Tibial artery (tissue), 4 donors: ENCODE measurements at regions of chr22 and their contacts with region 1.

Region 1: DNA sequence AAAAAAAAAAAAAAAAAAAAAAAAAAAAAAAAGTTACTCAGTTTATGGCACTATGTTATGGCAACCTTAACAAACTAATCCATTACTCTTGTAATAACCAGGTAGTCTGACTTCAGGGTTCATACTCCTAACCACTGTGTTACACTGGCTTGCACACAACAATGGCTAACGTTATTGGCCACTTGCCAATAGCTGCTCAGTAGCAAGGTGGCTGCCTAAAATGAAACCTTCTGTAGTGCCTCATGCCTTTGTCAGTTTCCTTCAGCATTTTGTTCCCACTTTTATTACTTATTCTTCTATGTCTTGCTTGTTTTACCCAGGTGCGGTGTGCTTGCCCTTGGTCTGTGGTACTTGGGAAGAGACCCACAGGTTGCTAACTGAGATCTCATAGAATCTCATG is 173.4 kb upstream of the LARGE1 start:
- DNase-seq: no peak
- H3K4me3 ChIP-seq: no peak overlapping the region
- H3K27ac ChIP-seq: no peak overlapping the region
- H3K4me1 ChIP-seq: no peaks in the 10 kb centered on the region
- H3K27me3 ChIP-seq: peaks cover 0 to 11% of the 10 kb centered on the region in 2 donors
- CTCF ChIP-seq: no peak

Region 2: DNA sequence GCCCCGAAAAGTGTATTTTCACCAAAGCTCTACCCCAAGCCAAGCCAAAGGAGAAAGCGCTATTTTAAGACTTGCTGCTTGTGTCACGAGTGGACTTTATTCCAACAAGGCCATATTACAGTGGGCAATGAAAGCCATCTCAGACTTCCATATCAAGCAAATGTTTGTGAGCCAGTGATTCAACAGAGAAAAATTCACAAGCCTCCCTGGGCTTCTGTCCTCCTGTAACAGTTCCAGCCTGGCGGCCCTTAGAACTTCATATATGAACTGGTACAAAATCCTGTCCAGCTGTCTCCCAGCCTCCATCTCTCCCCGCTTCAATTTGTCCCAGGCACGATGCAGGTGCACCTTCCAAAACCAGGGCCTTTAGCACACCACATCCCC is 184.6 kb before region 1 on chr22:
- intact Hi-C with region 1: no loop called
- DNase-seq: peak; percentile 26 to 71
- H3K4me3 ChIP-seq: peak overlapping the region; percentile 1 to 10
- H3K27ac ChIP-seq: peak overlapping the region; percentile 75 to 78
- H3K4me1 ChIP-seq: peaks cover 0 to 35% (median 22%) of the 10 kb centered on the region in 4 donors
- H3K27me3 ChIP-seq: no peaks in the 10 kb centered on the region
- CTCF ChIP-seq: no peak

Region 3: DNA sequence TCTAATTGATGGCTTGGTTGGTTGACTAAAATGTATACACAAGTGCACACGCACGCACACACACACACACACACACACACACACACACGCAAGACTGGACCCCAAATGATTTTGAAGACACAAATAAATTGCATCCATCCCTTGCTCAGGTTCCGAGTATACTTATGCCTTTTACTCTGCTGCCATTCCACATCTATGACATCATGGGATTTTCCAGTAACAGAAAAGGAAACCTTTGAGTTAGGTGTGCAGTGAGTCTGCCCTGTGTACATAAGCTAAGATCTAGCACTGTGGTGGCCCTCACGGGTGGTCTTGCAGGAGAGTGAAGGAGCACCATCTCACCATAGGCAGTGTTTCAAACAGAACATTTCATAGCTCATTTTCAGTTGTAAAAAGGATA is 152.9 kb before region 1 on chr22:
- intact Hi-C with region 1: loop called (anchors 10 kb)
- DNase-seq: no peak
- H3K4me3 ChIP-seq: no peak overlapping the region
- H3K27ac ChIP-seq: no peak overlapping the region
- H3K4me1 ChIP-seq: no peaks in the 10 kb centered on the region
- H3K27me3 ChIP-seq: peaks cover 0 to 5% of the 10 kb centered on the region in 2 donors
- CTCF ChIP-seq: no peak

Region 4: GRCh38 chr22:34055525-34056200 is 38.0 kb before region 1 on chr22:
- intact Hi-C with region 1: no loop called
- DNase-seq: no peak
- H3K4me3 ChIP-seq: no peak overlapping the region
- H3K27ac ChIP-seq: no peak overlapping the region
- H3K4me1 ChIP-seq: no peaks in the 10 kb centered on the region
- H3K27me3 ChIP-seq: no peaks in the 10 kb centered on the region
- CTCF ChIP-seq: no peak